Testis (tissue), 5 donors: ENCODE measurements at regions of chr15 and their contacts with region 1.

Region 1: DNA sequence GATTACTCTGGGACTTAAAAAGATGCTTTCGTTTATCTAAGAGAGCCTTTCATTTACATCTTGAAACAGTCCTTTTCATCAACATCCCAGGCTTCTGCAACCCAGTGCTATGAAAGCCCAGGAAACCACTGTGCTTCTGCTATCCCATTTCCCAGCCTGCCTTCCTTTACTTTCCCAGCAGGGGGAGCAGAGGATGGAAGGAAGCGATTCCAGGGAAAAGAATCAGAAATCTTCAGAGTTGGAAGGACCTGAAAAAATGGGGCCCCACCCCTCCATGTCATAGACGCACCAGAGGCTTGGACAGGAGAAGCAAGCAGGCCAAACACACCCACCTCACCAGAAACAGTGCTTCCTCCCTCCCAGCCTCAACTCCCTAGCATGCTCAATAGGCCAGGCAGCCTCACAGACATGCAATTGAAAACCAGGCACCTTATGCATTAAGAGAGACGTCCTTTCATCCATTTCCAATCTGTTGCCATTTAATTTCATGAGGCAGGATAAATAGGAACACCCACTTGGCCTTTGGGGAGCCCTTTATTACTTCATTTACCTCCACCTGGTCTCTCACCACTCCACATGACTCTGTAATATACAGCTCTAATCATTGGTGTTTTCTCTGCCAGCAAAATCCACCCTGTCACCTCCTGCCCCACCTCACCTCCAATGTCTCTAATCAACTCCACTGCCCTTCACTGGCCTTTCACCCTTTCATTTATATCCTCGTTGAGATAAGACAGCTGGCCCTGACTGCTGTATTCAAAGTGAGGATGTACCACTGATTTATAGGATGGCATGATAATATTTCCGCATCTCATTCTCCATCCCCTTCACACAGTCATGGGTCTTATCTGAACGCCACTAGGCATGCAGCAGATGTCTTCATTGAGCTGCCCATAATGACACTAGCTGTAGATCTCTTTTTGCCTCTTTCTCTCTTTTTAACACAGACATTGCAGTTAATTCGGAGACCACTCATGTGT is 583.9 kb downstream of the NTRK3 start:
- DNase-seq: peak; percentile 56
- H3K4me3 ChIP-seq: no peak overlapping the region
- H3K27ac ChIP-seq: no peak overlapping the region
- H3K4me1 ChIP-seq: no peaks in the 10 kb centered on the region
- H3K27me3 ChIP-seq: no peaks in the 10 kb centered on the region
- CTCF ChIP-seq: peak in 2 of 3 experiments; percentile 54 to 64
- POLR2A ChIP-seq: no peak

Region 2: GRCh38 chr15:87619161-87619960 is 53.2 kb before region 1 on chr15:
- intact Hi-C with region 1: loop called (anchors 10 kb)
- DNase-seq: no peak
- H3K4me3 ChIP-seq: no peak overlapping the region
- H3K27ac ChIP-seq: peak overlapping the region in 1 of 2 donors; percentile 16
- H3K4me1 ChIP-seq: peaks cover 7% of the 10 kb centered on the region
- H3K27me3 ChIP-seq: no peaks in the 10 kb centered on the region
- CTCF ChIP-seq: no peak
- POLR2A ChIP-seq: no peak

Region 3: DNA sequence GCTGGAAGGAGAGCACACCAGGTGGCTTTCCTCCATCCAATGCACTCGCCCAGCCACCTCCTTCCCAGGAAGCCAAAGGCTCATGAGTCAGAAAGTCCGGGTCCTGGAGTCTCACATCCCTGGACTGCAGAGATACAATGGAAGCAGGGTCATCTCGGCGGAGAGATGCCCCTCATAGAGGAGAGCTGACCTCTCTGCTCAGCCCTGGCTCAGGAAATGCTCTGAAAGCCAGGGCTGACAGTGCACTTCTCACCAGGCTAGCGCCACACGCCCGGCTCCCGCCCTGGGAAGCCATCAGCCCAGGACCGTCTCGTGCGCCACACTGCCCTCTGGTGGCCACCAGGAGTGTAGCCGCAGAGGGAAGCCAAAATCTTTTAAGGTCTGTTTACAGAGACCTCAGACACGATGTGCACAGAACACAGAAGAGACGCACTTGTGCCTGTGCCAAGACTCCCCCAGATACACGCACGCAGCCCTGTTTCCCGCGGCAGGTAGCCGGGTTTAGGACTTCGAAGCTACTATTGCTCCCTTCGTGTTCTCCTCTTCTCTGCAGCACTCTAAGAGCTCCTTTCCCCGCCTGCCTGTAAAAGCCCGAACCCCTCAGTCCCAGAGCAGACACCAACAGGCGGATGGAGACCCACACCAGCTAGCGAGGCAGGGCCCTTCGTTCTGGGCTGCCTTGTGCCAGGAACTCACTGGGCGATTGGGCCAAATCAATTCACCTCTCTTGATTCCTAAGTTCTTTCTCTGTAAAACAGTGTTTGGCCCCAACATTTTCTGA is 574.3 kb after region 1 on chr15:
- intact Hi-C with region 1: loop called (anchors 10 kb)
- DNase-seq: peak; percentile 88
- H3K4me3 ChIP-seq: no peak overlapping the region
- H3K27ac ChIP-seq: no peak overlapping the region
- H3K4me1 ChIP-seq: no peaks in the 10 kb centered on the region
- H3K27me3 ChIP-seq: no peaks in the 10 kb centered on the region
- CTCF ChIP-seq: peak; percentile 84 to 97 (median 94)
- POLR2A ChIP-seq: no peak